ENCODE measurements at regions of chr7 and their contacts with region 1.

Region 1: GRCh38 chr7:76262683-76263402 is 39.6 kb upstream of the HSPB1 start:
- DNase-seq: peak; percentile 66 to 68
- H3K4me3 ChIP-seq: no peak overlapping the region
- H3K27ac ChIP-seq: no peak overlapping the region
- H3K4me1 ChIP-seq: peaks cover 8 to 18% of the 10 kb centered on the region in 2 donors
- H3K27me3 ChIP-seq: peaks cover 10% of the 10 kb centered on the region
- CTCF ChIP-seq: peak; percentile 60 to 75 (median 65)
- POLR2A ChIP-seq: no peak

Region 2: DNA sequence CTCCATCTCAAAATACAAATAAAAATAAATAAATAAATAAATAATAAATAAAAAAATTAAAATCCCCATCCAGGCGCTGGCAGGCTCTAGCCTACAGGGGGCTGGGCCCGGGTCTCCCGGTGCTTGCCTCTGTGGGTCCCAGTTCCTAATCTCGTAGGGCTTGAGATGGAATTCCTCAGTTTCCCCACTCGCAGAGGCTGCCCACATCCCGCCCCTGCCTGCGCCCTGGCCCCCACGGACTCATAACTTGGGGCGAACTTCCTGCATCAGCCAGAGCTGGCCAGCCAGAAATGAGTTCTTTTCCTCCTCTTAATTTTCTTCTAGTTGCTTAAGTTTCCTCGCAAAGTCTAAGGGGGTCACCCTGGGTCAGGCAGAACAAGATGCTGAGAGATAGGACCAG is 83.2 kb before region 1 on chr7:
- intact Hi-C with region 1: loop called (anchors 5 kb)
- DNase-seq: no peak
- H3K4me3 ChIP-seq: no peak overlapping the region
- H3K27ac ChIP-seq: no peak overlapping the region
- H3K4me1 ChIP-seq: no peaks in the 10 kb centered on the region
- H3K27me3 ChIP-seq: no peaks in the 10 kb centered on the region
- CTCF ChIP-seq: no peak
- POLR2A ChIP-seq: no peak